CD14-positive monocyte (primary cell): ENCODE measurements at regions of chr12 and their contacts with region 1.

Region 1: DNA sequence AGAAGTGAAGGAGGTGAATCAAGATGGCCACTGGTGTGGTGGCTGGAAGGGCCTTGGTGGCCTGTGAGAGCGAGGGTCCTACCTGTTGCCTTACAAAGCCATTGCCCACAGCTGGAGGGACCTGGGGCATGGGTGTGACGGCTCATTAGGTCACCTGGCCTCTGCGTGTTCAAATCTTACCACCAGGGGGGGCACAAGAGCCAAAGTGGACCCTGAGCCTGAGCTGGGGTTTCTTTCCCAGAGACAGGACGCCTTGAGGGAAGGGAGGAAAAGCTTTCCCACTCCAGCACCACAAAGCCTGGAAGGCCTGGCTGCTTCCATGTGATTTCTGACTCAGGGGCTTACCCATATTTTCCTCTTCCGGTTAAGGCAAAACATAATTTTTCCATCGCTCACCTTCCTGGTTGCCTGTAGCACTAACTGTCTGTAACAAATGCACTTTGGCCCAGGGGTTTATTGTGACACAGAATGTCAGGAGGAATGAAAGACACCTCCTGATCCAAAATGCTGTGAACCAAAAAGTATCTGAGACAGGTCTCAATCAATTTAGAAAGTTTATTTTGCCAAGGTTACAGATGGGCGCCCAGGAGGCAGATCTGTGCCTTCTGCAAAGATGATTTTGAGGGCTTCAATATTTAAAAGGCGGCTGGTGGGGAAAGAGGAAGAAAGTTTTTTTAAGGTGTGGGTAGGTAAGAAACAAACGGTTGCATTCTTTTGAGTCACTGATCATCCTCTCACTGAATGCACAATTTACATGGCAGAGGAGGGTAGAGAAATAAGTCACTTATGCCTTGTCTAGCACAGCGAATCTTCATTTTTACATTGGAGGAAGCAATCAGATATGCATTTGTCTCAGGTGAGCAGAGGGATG is 4.3 kb upstream of the CD9 start:
- DNase-seq: peak; percentile 47 to 71 (median 68)
- H3K4me3 ChIP-seq: no peak overlapping the region
- H3K4me3 Mint-ChIP-seq: no peak overlapping the region
- H3K27ac ChIP-seq: no peak overlapping the region
- H3K27ac Mint-ChIP-seq: peak overlapping the region in 5 of 7 donors; percentile 41 to 79 (median 52)
- H3K4me1 ChIP-seq: peaks cover 33 to 37% of the 10 kb centered on the region in 2 donors
- H3K4me1 Mint-ChIP-seq: peaks cover 53% of the 10 kb centered on the region
- H3K27me3 ChIP-seq: peaks cover 12 to 28% of the 10 kb centered on the region in 2 donors
- H3K27me3 Mint-ChIP-seq: peaks cover 33 to 51% (median 47%) of the 10 kb centered on the region in 3 donors
- CTCF ChIP-seq: peak; percentile 95

Region 2: GRCh38 chr12:6167327-6168259 is 28.3 kb before region 1 on chr12:
- intact Hi-C with region 1: loop called in 1 of 2 experiments (anchors 2 kb)
- DNase-seq: peak; percentile 98 to 100 (median 99)
- H3K4me3 ChIP-seq: peak overlapping the region in 1 of 3 experiments; percentile 18
- H3K4me3 Mint-ChIP-seq: peak overlapping the region; percentile 66 to 75
- H3K27ac ChIP-seq: peak overlapping the region; percentile 97 to 100
- H3K27ac Mint-ChIP-seq: peak overlapping the region; percentile 99 to 100 (median 100)
- H3K4me1 ChIP-seq: peaks cover 49 to 55% of the 10 kb centered on the region in 2 donors
- H3K4me1 Mint-ChIP-seq: peaks cover 60% of the 10 kb centered on the region
- H3K27me3 ChIP-seq: no peaks in the 10 kb centered on the region
- H3K27me3 Mint-ChIP-seq: no peaks in the 10 kb centered on the region
- CTCF ChIP-seq: no peak